Activated CD4-positive, alpha-beta T cell treated with anti-CD3 and anti-CD28 coated beads, Interleukin-2, amount 10 ng/mL, durations not matched to agents 24 days and 14 days (primary cell): ENCODE measurements at regions of chr21 and their contacts with region 1.

Region 1: DNA sequence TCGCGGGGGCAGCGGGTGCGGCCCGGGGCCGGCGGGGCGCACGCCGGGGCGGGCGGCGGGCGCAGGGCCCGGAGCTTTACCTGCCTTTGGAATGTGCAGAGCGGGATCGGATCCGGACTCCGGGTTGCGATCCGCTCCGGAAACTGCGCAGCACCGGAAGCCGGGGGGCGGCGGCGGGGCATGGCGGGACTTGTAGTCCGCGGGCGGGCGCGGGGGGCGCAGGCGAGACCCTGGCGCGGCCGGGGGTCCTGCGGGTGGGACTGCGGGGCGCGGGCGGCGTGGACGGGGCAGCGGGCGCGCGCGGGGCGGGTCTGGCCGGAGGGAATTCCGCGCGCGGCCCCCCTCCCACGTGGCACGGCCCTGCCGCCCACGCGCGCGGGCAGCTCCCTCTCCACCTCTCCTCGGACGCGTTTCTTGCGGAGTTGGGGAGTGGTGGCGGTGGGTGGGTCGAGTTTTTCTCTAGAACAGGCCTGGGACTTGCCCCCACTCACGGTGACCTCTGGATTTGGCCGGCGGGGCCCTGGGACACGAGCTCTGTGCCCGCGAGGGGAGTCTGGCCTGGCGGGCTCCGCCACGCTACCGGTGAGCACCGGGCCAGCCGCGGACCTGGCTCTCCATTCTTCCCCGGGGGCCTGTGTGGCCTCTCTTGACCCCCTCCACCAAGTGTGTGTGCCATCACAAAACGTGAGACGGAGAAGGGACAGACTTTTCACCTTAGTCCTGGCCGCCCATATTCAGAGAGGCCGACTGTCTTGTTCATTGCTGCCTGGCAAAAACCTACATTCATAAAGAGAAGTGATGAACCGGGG is at the start of gene PRDM15:
- DNase-seq: peak; percentile 95
- H3K4me3 Mint-ChIP-seq: peak within 1 kb of the TSS; percentile 91
- H3K27ac Mint-ChIP-seq: peak within 1 kb of the TSS; percentile 98
- H3K4me1 Mint-ChIP-seq: peaks cover 21% of the 10 kb centered on the region
- H3K27me3 Mint-ChIP-seq: no peaks in the 10 kb centered on the region
- total RNA-seq, gene PRDM15: 18.6 and 19.1 TPM in 2 replicates

Region 2: GRCh38 chr21:40936771-40937261 is 942.6 kb before region 1 on chr21:
- intact Hi-C with region 1: no loop called
- DNase-seq: no peak
- H3K4me3 Mint-ChIP-seq: no peak overlapping the region
- H3K27ac Mint-ChIP-seq: no peak overlapping the region
- H3K4me1 Mint-ChIP-seq: no peaks in the 10 kb centered on the region
- H3K27me3 Mint-ChIP-seq: no peaks in the 10 kb centered on the region

Region 3: GRCh38 chr21:41868062-41868710 is 11.2 kb before region 1 on chr21:
- intact Hi-C with region 1: no loop called
- DNase-seq: no peak
- H3K4me3 Mint-ChIP-seq: no peak overlapping the region
- H3K27ac Mint-ChIP-seq: no peak overlapping the region
- H3K4me1 Mint-ChIP-seq: peaks cover 12% of the 10 kb centered on the region
- H3K27me3 Mint-ChIP-seq: no peaks in the 10 kb centered on the region

Region 4: GRCh38 chr21:41899426-41900202 is 20.2 kb after region 1 on chr21:
- intact Hi-C with region 1: loop called (anchors 2 kb)
- DNase-seq: peak; percentile 76
- H3K4me3 Mint-ChIP-seq: peak overlapping the region; percentile 61
- H3K27ac Mint-ChIP-seq: peak overlapping the region; percentile 84
- H3K4me1 Mint-ChIP-seq: peaks cover 28% of the 10 kb centered on the region
- H3K27me3 Mint-ChIP-seq: no peaks in the 10 kb centered on the region

Region 5: DNA sequence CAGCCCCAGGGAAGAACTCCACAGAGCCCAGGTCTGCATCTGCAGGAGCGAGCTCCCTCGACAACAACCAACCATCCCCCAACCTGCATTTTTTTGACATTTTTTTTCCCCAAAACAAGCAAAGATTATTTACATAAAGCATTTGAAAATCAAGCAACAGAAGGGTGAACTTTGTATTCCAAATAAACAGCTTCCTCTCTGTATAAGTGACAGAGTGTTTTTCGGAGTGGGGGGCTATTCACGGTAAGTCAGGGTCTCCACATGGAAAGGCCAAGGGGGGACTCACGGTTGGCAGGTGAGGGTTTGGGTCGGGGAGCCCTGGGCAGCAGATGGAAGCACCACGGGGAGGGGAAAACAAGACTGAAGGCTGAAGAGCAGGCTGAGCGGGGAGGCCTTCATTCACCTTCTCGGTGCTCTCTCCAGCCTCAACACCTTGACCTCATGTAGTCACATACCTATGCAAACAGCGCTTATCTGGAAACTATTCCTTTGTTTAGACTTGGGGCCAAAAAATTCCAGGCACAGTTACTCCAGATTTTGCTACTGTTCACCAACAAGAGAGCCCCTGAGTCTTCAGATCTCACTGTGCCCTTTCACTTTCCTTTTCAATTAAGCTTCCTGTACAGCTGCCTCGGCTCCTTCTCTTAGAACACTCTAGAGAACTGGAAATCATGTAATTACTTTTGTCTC is 46.9 kb after region 1 on chr21:
- intact Hi-C with region 1: loop called (anchors 2 kb)
- DNase-seq: peak; percentile 84
- H3K4me3 Mint-ChIP-seq: peak overlapping the region; percentile 90
- H3K27ac Mint-ChIP-seq: peak overlapping the region; percentile 96
- H3K4me1 Mint-ChIP-seq: peaks cover 53% of the 10 kb centered on the region
- H3K27me3 Mint-ChIP-seq: no peaks in the 10 kb centered on the region

Region 6: GRCh38 chr21:42107881-42108553 is 228.6 kb after region 1 on chr21:
- intact Hi-C with region 1: loop called (anchors 5 kb)
- DNase-seq: peak; percentile 91
- H3K4me3 Mint-ChIP-seq: peak overlapping the region; percentile 46
- H3K27ac Mint-ChIP-seq: no peak overlapping the region
- H3K4me1 Mint-ChIP-seq: peaks cover 5% of the 10 kb centered on the region
- H3K27me3 Mint-ChIP-seq: peaks cover 9% of the 10 kb centered on the region